ENCODE measurements at regions of chrX and their contacts with region 1.

Region 1: DNA sequence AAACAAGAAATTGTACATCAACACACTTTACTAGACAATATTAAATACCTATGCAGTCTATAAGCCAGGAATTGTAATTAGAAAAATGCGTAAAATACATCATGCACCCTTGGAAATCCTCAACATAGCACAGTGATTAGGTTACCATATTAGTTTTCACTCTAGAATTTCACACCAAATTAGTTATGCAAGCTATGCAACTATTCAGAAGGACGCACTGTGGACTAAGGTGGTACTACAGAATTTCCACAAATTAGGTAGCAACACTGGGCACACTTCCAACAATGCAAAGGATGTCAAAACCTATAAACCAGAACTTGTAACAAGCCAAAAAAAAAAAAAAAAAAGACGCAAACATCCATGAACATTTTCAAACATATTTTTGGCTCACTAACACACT is 71.1 kb upstream of the ZCCHC13 start:
- DNase-seq: no peak
- ATAC-seq: peak; percentile 71
- H3K4me3 ChIP-seq: no peak overlapping the region
- H3K27ac ChIP-seq: no peak overlapping the region
- H3K4me1 ChIP-seq: no peaks in the 10 kb centered on the region
- H3K27me3 ChIP-seq: no peaks in the 10 kb centered on the region
- CTCF ChIP-seq: no peak; a peak in 1 of 6 replicates
- EP300 ChIP-seq: no peak
- POLR2A ChIP-seq: no peak
- RAD21 ChIP-seq: no peak

Region 2: DNA sequence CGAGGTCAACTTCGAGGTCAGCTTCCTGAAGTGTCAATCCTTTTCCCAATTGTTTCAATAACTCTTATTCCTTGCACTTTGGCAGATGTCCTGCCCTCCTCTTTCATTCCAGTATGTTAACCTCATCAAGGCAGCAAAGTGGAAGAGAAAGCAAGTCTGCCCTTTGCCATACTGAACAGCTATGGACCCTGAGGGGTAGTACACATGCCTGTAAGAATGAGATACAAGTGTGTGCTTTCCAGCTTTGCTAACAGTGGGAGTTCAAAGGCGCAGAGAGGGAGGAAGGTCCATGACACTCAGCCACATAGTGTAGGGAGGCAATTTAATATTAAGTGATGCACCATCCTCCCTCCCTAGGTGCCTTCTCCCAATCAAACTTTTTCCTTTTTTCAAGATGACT is 25.3 kb before region 1 on chrX:
- CTCF ChIA-PET with region 1: no interaction called
- POLR2A ChIA-PET with region 1: no interaction called
- RAD21 ChIA-PET with region 1: no interaction called
- SMC1A ChIA-PET with region 1: no interaction called
- in situ Hi-C with region 1: no loop called
- intact Hi-C with region 1: no loop called
- DNase-seq: no peak
- ATAC-seq: no peak
- H3K4me3 ChIP-seq: no peak overlapping the region
- H3K27ac ChIP-seq: no peak overlapping the region
- H3K4me1 ChIP-seq: no peaks in the 10 kb centered on the region
- H3K27me3 ChIP-seq: no peaks in the 10 kb centered on the region
- CTCF ChIP-seq: no peak
- EP300 ChIP-seq: no peak
- POLR2A ChIP-seq: no peak
- RAD21 ChIP-seq: no peak

Region 3: DNA sequence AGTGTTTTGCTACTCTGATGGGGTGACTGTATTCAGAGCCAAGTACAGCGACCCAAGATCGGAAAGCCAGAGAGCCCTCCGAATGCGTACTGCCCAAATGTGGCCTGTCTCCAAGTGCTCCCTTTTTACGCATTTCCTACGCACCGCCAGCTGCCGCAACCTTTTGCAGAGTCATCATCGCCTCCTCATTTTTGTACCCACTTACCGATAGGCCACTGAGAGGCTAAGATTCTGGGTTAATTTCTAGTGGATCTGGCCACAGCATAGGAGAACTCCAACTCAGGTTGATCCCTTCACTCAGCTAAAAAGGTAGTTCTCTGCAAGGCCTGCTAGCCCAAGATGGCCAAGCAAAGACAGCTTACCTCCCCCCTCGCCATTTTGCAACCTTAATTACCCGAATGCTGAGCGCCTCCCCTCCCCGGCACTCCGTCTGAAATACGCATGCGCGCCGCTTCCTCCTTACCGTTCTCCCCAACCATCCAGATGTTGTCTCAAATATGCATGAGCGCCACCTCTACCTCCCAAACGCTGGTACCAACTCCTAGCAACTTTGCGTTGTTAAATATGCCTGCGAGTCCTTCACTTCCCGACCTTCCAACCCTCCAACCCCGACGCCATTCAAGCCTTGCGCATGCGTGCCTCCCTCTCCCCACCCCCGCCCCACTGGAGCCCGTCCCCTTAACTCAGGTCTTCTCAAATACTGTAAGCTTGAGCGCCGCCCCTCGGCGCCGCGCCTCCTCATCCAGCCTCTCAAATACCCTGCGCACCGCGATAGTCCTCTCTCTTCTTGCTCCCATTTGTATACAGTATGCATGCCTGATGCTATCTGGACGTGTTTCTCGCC is 59.3 kb after region 1 on chrX:
- CTCF ChIA-PET with region 1: no interaction called
- POLR2A ChIA-PET with region 1: no interaction called
- RAD21 ChIA-PET with region 1: no interaction called
- SMC1A ChIA-PET with region 1: interaction called, 4 read pairs
- in situ Hi-C with region 1: no loop called
- intact Hi-C with region 1: loop called (anchors 5 kb)
- DNase-seq: peak; percentile 67
- ATAC-seq: peak; percentile 92
- H3K4me3 ChIP-seq: peak overlapping the region; percentile 69
- H3K27ac ChIP-seq: peak overlapping the region; percentile 80
- H3K4me1 ChIP-seq: no peaks in the 10 kb centered on the region
- H3K27me3 ChIP-seq: no peaks in the 10 kb centered on the region
- CTCF ChIP-seq: peak in 2 of 3 experiments; percentile 16 to 50; a peak in 2 of 6 replicates
- EP300 ChIP-seq: no peak
- POLR2A ChIP-seq: peak; percentile 60; the same call in 1 of the 2 replicates
- RAD21 ChIP-seq: peak; percentile 17; the same call in 1 of the 2 replicates